Gastrocnemius medialis (tissue), 4 donors: ENCODE measurements at regions of chr10 and their contacts with region 1.

Region 1: DNA sequence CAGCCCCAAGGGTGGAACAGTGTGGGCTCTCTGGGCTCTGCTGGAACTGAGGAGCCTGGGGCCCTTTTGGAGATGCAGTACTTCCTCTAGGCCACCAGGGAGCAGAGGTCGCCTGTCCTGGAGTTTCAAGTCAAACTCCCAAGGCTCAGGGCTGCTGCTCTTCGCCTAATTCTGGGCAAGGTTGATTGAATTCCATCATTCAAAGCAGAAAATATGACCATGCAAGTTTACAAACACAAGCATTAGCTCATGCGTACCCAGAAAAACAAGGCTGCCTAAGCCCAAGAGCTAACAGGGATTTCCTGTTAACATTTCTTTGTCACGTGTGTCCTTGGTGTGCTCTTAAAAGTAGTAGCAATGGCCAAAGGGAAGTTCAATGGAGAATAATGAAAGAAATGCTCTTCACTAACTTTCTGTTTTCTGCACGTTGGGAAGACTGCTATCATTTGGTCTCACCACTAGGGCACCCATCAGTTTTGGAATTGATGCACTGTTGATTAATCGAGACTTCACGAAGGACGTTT is 20.1 kb downstream of the LDB3 start:
- DNase-seq: peak; percentile 46 to 70
- ATAC-seq: peak; percentile 43 to 52
- H3K4me3 ChIP-seq: no peak overlapping the region
- H3K27ac ChIP-seq: peak overlapping the region; percentile 2 to 99 (median 60)
- H3K4me1 ChIP-seq: peaks cover 65 to 78% of the 10 kb centered on the region in 2 donors
- H3K27me3 ChIP-seq: no peaks in the 10 kb centered on the region
- CTCF ChIP-seq: peak; percentile 81 to 91 (median 86)
- POLR2A ChIP-seq: no peak

Region 2: GRCh38 chr10:86644152-86644793 is 44.2 kb before region 1 on chr10:
- in situ Hi-C with region 1: no loop called
- intact Hi-C with region 1: loop called (anchors 1 kb)
- DNase-seq: no peak
- ATAC-seq: peak in 1 of 2 donors; percentile 43
- H3K4me3 ChIP-seq: no peak overlapping the region
- H3K27ac ChIP-seq: peak overlapping the region; percentile 53 to 86 (median 70)
- H3K4me1 ChIP-seq: peaks cover 23 to 26% of the 10 kb centered on the region in 2 donors
- H3K27me3 ChIP-seq: no peaks in the 10 kb centered on the region
- CTCF ChIP-seq: peak in 1 of 5 experiments; percentile 28
- POLR2A ChIP-seq: no peak

Region 3: DNA sequence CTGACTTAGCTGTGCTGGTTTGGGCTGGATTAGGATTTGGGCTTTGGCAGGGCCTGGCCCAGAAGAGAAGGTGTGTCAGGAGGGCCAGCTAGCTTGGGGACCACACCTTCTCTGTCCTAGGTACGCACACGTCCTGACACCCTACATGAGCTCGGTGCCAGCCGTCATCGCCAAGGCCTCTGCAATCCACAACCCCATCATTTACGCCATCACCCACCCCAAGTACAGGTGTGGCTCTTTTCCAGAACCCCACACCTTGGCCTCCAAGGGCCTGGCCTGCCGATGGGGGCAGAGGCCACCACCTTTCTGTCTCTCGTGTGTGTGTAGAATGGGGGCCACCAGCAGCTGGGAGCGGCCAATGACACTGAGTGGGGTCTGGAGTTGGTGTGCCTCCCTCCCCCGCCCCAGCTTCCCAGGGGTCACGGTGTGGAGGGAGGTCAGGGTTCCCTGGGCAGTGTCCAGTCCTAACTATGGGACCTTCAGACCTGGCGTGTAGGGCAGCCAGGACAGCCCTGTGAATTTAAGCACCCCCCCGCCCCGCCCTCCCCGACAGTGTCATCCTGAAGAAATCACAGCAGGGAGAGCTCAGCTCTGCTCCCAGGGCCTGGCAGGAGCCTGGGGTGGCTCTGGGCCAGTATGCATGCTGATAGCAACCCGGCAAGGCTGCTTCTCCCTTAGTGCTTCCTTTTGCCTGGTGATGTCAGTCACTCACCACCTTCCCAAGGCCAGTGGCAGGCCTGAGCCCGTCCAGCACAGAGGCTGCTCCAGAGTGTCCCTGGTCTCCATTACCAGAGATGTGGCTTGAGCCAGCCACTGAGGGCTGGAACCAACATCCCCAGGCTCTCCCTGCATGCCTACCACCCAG is 27.1 kb before region 1 on chr10:
- in situ Hi-C with region 1: no loop called
- intact Hi-C with region 1: loop called (anchors 1 kb)
- DNase-seq: peak; percentile 90 to 98
- ATAC-seq: peak; percentile 76 to 82
- H3K4me3 ChIP-seq: no peak overlapping the region
- H3K27ac ChIP-seq: peak overlapping the region; percentile 98 to 100 (median 99)
- H3K4me1 ChIP-seq: peaks cover 51 to 55% of the 10 kb centered on the region in 2 donors
- H3K27me3 ChIP-seq: no peaks in the 10 kb centered on the region
- CTCF ChIP-seq: peak in 1 of 5 experiments; percentile 33
- POLR2A ChIP-seq: peak; percentile 25 to 41

Region 4: DNA sequence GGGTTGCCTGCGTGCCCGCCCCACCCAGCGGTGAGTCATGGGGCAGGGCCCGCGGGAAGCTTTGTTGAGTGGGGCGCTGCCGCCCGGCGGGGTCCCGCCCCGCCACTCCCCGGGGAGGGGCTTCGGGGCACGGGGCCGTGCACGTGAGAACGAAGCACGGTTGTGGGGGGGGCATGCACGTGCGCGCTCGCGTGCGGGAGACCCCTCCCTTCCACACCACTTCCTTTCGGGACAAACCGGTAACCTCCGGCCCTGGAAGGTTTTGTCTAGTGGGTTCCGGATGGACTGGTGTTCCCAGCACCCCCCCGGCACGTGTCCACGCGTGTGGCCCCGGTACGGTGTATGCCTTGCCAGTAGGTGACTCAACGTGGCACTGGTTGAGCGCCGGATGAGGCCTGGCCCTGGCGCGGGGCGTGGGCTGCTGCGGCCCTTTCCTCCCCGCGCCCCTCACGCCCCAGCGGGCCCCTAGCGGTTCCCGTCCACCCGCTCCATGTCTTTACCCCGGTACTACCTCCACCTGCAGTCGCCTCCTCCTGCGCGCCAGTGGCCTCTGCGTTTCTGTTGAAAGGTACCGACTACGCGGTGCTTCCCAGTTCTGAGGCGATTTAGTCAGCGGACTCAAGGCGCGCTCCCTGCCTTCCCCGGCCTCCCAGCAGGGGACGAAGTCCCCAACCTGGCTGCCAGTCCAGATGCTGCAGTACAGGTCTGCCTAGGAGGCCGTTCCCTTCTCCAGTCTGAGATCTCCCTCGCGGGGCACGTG is 283.0 kb after region 1 on chr10:
- in situ Hi-C with region 1: no loop called
- intact Hi-C with region 1: loop called (anchors 5 kb)
- DNase-seq: peak; percentile 75 to 85
- ATAC-seq: peak; percentile 71 to 76
- H3K4me3 ChIP-seq: peak overlapping the region; percentile 62 to 87 (median 74)
- H3K27ac ChIP-seq: peak overlapping the region; percentile 90 to 98 (median 96)
- H3K4me1 ChIP-seq: peaks cover 27 to 37% of the 10 kb centered on the region in 2 donors
- H3K27me3 ChIP-seq: no peaks in the 10 kb centered on the region
- CTCF ChIP-seq: no peak
- POLR2A ChIP-seq: peak in 1 of 2 donors; percentile 26